ENCODE measurements at regions of chr3 and their contacts with region 1.

Region 1: DNA sequence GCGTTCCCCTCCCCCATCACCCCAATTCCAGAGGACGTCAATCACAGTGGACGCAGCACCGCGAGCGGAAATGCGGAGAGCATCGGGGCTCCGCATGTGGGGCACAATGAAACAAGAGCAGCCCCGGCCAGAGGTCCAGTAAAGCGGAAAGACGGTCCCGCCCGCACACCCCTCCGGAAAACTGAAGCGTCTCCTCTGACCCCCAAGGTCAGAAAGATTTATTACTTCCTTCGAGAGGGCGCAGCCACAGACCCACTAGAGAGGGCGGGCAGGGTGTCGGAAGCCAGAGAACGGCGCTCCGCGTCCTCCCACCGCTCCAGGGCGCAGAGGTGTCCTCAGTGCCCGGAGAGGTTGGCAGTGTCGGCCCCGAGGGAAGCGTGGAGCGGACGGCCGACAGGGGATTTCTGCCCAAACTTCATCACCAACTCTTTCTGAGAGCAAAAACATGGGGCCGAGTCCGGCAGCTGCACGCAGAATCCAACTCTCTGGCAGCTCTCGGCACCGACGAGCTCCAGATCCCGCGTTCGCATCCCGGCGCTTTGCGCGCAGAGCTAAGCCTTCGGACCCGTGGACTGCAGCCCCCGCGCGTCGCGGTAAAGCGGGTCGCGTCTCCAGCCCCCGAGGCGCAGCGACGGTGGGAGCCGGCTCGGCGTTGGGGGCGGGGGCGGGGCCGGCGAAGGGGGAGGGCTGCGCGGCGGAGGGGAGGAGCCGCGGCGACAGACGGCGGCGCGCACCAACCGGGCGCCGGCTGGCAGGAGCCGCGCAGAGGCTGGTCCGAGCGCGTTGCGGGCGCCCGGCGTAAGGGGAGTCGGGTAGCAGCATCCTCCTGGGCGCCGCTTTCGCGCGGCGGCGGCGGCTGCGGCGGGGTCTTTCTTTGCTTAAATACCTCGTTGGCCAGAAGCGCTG is at the start of gene CHST2:
- DNase-seq: peak; percentile 81
- H3K4me3 ChIP-seq: peak within 1 kb of the TSS; percentile 78 to 81 (median 80)
- H3K27ac ChIP-seq: no peak within 1 kb of the TSS
- H3K4me1 ChIP-seq: peaks cover 11% of the 10 kb centered on the region
- H3K27me3 ChIP-seq: no peaks in the 10 kb centered on the region
- CTCF ChIP-seq: no peak
- total RNA-seq, gene CHST2: 12.4 to 17.0 TPM

Region 2: GRCh38 chr3:142566096-142566495 is 553.2 kb before region 1 on chr3:
- CTCF ChIA-PET with region 1: no interaction called
- dilution Hi-C with region 1: no loop called
- in situ Hi-C with region 1: no loop called
- intact Hi-C with region 1: no loop called
- DNase-seq: peak; percentile 78
- H3K4me3 ChIP-seq: no peak overlapping the region
- H3K27ac ChIP-seq: peak overlapping the region; percentile 59
- H3K4me1 ChIP-seq: peaks cover 10% of the 10 kb centered on the region
- H3K27me3 ChIP-seq: no peaks in the 10 kb centered on the region
- CTCF ChIP-seq: no peak

Region 3: DNA sequence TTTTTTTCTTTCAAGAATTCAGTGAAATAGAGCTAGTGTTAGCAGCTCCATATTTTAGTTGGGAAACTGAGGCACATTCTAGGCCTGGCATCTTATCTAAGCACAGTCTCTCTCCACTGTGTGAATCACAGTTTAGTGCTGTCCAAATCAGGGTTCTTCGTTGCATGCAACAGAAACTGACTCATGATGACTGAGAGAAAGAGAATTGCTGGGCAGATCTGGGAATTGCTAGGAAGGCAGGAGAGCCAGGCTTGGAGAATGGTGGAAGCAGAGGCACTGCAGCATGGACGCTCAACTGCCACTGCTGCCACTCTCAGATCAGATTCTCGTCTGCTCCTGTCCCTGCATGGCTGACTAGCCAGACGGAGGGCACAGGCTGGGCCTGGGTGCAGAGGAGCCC is 40.4 kb before region 1 on chr3:
- CTCF ChIA-PET with region 1: no interaction called
- dilution Hi-C with region 1: no loop called
- in situ Hi-C with region 1: no loop called
- intact Hi-C with region 1: no loop called
- DNase-seq: peak; percentile 71
- H3K4me3 ChIP-seq: no peak overlapping the region
- H3K27ac ChIP-seq: no peak overlapping the region
- H3K4me1 ChIP-seq: peaks cover 2% of the 10 kb centered on the region
- H3K27me3 ChIP-seq: no peaks in the 10 kb centered on the region
- CTCF ChIP-seq: no peak

Region 4: GRCh38 chr3:143329567-143330211 is 210.4 kb after region 1 on chr3:
- CTCF ChIA-PET with region 1: no interaction called
- dilution Hi-C with region 1: no loop called
- in situ Hi-C with region 1: no loop called
- intact Hi-C with region 1: loop called (anchors 5 kb)
- DNase-seq: no peak
- H3K4me3 ChIP-seq: no peak overlapping the region
- H3K27ac ChIP-seq: no peak overlapping the region
- H3K4me1 ChIP-seq: no peaks in the 10 kb centered on the region
- H3K27me3 ChIP-seq: peaks cover 5% of the 10 kb centered on the region
- CTCF ChIP-seq: no peak

Region 5: DNA sequence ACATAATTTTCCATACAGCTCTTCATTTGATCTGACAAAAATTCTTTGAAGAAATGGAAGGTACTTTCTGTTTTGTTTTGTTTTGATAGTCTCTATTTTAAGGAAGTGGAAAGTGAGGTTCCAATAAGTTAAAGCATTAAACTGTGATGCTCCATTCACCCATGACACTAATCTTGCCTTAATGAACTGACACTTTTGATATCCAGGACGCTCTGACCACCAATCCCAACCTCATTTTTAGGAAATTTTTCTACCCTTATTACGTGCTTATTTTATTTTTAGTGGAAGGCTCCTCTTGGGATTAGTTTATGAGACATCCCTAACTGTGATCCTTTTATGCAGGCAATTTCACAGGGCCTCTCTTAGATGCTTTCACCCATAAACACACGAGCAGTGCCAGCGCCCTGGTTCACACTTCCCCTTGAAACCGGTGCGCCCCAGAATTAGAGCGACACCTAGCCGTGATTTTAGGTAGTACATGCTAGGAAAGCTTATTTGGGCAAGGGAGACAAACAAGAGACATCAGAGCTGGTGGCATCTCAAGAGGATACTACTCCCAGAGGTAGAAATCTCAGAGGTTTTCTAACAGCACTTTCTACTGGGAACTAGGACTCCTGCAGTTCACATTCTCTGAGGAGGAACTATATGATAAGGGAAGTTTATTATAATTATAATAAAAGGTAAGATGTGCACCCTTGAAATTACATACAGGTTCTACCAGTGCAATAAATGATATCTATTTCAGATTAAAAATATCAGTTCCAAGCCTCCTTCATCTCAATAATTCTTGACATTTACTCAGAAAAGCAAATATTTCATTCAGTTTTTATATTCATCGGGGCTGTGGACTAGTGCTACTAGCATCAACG is 555.1 kb after region 1 on chr3:
- CTCF ChIA-PET with region 1: no interaction called
- dilution Hi-C with region 1: no loop called
- in situ Hi-C with region 1: no loop called
- intact Hi-C with region 1: loop called (anchors 1 kb)
- DNase-seq: peak; percentile 59
- H3K4me3 ChIP-seq: no peak overlapping the region
- H3K27ac ChIP-seq: no peak overlapping the region
- H3K4me1 ChIP-seq: peaks cover 3% of the 10 kb centered on the region
- H3K27me3 ChIP-seq: no peaks in the 10 kb centered on the region
- CTCF ChIP-seq: peak; percentile 91 to 95